ENCODE measurements at regions of chr13 and their contacts with region 1.

Region 1: DNA sequence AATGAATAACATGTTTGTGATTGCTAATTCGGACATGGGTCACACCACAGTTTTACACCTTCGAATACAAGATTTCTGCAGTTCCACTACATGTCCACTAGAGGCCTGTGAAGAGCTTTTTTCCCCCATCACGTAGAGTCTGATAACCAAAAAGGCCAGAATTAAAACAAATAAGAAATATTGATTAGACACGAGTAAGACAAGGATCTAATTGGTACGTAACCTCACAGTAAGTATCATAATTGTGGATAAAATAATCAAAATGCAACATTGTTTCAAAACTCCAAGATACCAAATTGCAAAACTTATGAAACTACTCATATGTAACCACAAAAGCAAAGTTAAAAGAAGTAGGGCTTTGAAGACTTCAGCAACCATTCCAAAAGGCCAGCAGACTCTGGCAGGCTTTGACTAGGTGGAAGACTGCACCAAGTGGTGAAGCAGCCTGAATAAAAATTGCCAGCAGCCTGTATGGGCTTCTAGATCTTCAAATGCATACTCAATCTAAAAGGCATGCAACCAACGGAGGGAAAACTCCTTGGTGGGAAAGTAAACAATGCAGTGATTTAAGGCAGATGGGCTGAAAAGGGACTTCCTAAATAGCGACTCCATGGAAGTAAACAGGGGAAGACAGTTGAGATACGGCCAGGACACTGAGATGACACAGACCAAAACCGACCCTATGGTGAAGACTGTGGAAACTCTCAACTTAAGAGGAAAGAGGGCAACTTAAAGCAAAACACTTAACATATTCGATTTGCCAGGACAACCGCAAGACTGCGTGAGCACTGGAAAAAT is 56.7 kb downstream of the STARD13 start:
- DNase-seq: no peak
- H3K4me3 ChIP-seq: no peak overlapping the region
- H3K27ac ChIP-seq: peak overlapping the region in 5 of 8 donors; percentile 25 to 54 (median 35)
- H3K4me1 ChIP-seq: peaks cover 0 to 31% (median 11%) of the 10 kb centered on the region in 6 donors
- H3K27me3 ChIP-seq: no peaks in the 10 kb centered on the region
- CTCF ChIP-seq: peak; percentile 45 to 85 (median 77)
- POLR2A ChIP-seq: no peak

Region 2: GRCh38 chr13:33537026-33537425 is 308.2 kb after region 1 on chr13:
- intact Hi-C with region 1: loop called (anchors 10 kb)
- DNase-seq: no peak
- H3K4me3 ChIP-seq: no peak overlapping the region
- H3K27ac ChIP-seq: no peak overlapping the region
- H3K4me1 ChIP-seq: peaks cover 6 to 43% (median 18%) of the 10 kb centered on the region in 6 donors
- H3K27me3 ChIP-seq: no peaks in the 10 kb centered on the region
- CTCF ChIP-seq: no peak
- POLR2A ChIP-seq: no peak

Region 3: DNA sequence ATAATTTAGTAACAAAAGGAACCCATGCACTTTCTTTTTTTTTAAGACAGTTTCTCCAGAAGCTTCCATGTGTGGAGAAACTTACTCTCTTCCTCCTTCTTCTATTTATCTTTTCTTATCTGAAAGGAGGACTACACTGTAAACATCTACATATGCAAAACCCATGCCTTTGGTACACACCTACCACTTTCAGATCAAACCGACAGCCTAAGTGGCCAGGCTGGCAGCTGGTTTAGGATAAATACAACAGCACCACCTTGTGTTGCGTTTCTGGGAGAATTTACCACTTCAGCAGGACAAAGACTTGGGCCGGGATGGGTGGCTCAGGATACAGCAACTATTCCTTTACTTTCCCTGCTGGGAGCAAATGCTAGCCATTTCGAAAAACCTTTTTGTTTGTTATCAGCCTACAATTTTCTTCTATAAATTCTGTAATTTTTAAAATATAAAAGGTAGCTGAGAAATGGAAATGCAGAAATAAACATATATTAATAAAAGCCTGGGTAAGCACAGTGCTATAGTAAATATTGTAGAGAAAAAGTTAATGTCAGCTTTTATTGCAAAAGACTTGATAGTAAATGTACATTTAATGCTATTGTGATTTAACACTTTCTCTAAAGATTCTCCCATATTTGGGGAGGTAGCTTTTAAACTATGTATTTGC is 495.1 kb after region 1 on chr13:
- intact Hi-C with region 1: loop called (anchors 10 kb)
- DNase-seq: peak; percentile 82
- H3K4me3 ChIP-seq: no peak overlapping the region
- H3K27ac ChIP-seq: peak overlapping the region in 5 of 8 donors; percentile 54 to 78 (median 63)
- H3K4me1 ChIP-seq: peaks cover 16 to 44% (median 33%) of the 10 kb centered on the region in 6 donors
- H3K27me3 ChIP-seq: peaks cover 0 to 6% (median 0%) of the 10 kb centered on the region in 7 donors
- CTCF ChIP-seq: peak; percentile 33 to 83 (median 73)
- POLR2A ChIP-seq: no peak